Gastrocnemius medialis (tissue), 4 donors: ENCODE measurements at regions of chr20 and their contacts with region 1.

Region 1: GRCh38 chr20:2651772-2652723 is at the start of gene NOP56:
- DNase-seq: peak; percentile 81 to 85
- ATAC-seq: peak; percentile 90 to 92
- H3K4me3 ChIP-seq: peak within 1 kb of the TSS; percentile 84 to 96 (median 90)
- H3K27ac ChIP-seq: peak within 1 kb of the TSS; percentile 91 to 97 (median 94)
- H3K4me1 ChIP-seq: peaks cover 17 to 21% of the 10 kb centered on the region in 2 donors
- H3K27me3 ChIP-seq: no peaks in the 10 kb centered on the region
- CTCF ChIP-seq: no peak
- POLR2A ChIP-seq: peak; percentile 84 to 95
- total RNA-seq, gene NOP56: 40.7 to 71.0 (median 54.9) TPM

Region 2: GRCh38 chr20:2470423-2471193 is 181.4 kb before region 1 on chr20 and contains the start of gene SNRPB:
- in situ Hi-C with region 1: no loop called
- intact Hi-C with region 1: loop called (anchors 2 kb)
- DNase-seq: peak; percentile 96 to 97
- ATAC-seq: peak; percentile 98 to 99
- H3K4me3 ChIP-seq: peak within 1 kb of the TSS; percentile 77 to 95 (median 84)
- H3K27ac ChIP-seq: peak within 1 kb of the TSS; percentile 86 to 95 (median 88)
- H3K4me1 ChIP-seq: peaks cover 12 to 15% of the 10 kb centered on the region in 2 donors
- H3K27me3 ChIP-seq: no peaks in the 10 kb centered on the region
- CTCF ChIP-seq: no peak
- POLR2A ChIP-seq: peak; percentile 86 to 96
- total RNA-seq, gene SNRPB: 131 to 209 (median 190) TPM

Region 3: DNA sequence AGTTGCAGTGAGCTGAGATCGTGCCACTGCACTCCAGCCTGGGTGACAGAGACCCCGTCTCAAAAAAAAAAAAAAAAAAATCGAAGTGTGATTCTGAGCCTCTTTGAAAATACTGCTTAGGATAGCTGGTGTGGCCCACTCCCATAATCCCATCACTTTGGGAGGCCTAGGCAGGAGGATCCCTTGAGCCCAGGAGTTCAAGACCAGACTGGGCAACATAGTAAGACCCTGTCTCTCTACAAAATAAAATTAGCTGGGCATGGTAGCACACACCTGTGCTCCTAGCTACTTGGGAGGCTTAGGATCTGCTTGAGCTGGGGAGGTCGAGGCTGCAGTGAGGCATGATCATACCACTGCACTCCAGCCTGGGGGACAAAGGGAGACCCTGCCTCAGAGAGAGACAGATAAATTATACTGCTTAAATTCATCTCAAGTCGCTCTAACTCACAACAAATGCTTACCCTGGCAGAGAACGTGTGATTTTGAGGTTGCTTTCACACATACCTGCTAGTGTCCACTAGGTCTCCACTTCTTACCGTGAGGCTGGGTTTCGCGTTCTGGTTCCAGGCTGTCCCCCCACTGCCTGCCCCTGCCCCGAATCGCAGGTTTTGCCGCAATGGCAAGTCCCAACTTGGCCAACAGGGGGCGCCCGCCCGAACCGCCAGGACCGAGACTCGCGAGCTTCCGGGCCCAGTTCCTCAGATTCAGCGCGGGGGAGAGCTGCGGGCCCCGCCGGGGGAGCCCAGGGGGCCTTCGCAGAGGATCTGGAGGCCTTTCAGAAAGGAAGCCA is 127.9 kb before region 1 on chr20:
- in situ Hi-C with region 1: loop called in 1 of 4 experiments (anchors 10 kb)
- intact Hi-C with region 1: loop called (anchors 2 kb)
- DNase-seq: peak; percentile 53 to 64
- ATAC-seq: peak; percentile 74 to 75
- H3K4me3 ChIP-seq: peak overlapping the region; percentile 70 to 85 (median 80)
- H3K27ac ChIP-seq: peak overlapping the region; percentile 68 to 86 (median 82)
- H3K4me1 ChIP-seq: peaks cover 0 to 12% of the 10 kb centered on the region in 2 donors
- H3K27me3 ChIP-seq: peaks cover 0 to 4% (median 0%) of the 10 kb centered on the region in 3 donors
- CTCF ChIP-seq: peak; percentile 69 to 96 (median 89)
- POLR2A ChIP-seq: peak; percentile 50 to 56

Region 4: DNA sequence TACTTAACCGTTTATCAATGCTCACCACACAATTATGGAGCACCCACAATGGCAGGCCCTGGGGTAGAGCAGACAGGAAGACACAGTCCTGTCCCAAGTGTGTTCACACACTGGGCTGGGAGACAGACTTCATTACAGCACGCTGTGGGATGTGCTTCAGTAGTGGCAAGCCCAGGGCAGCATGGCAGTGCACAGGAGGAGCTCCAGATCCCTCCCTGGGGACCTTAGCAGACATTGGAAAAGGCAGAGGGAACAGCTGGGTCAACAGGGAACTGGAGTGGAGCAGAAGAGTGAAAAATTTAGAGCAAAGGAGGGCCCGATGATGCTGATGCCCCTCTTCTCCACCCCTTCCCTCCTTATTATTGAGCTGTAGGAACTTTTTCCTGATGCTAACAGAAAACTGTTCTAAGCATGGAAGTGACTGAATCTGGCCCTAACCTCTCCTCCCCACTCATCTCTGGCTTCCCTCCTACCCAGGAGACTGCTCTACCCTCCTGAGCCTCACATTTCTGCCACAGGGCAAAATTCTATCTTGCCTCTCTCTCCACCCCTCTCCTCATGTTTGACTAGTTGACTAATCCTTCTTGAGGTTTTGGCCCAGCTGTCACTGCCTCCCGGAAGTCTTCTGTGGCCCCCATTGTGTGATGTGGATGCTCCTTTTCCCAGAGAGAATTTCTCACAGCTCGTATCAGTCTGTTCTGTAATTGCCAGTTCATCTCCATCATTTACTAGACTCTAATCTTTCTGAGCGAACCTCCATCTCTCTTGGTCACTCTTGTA is 40.9 kb before region 1 on chr20:
- in situ Hi-C with region 1: no loop called
- intact Hi-C with region 1: no loop called
- DNase-seq: no peak
- ATAC-seq: no peak
- H3K4me3 ChIP-seq: no peak overlapping the region
- H3K27ac ChIP-seq: no peak overlapping the region
- H3K4me1 ChIP-seq: no peaks in the 10 kb centered on the region
- H3K27me3 ChIP-seq: no peaks in the 10 kb centered on the region
- CTCF ChIP-seq: no peak
- POLR2A ChIP-seq: no peak

Region 5: GRCh38 chr20:2663887-2664719 is 12.1 kb after region 1 on chr20 and contains the start of gene IDH3B:
- in situ Hi-C with region 1: no loop called
- intact Hi-C with region 1: loop called (anchors 1 kb)
- DNase-seq: peak; percentile 87 to 93
- ATAC-seq: peak; percentile 97 to 98
- H3K4me3 ChIP-seq: peak within 1 kb of the TSS; percentile 66 to 98 (median 83)
- H3K27ac ChIP-seq: peak within 1 kb of the TSS; percentile 86 to 89 (median 87)
- H3K4me1 ChIP-seq: peaks cover 13 to 14% of the 10 kb centered on the region in 2 donors
- H3K27me3 ChIP-seq: no peaks in the 10 kb centered on the region
- CTCF ChIP-seq: no peak
- POLR2A ChIP-seq: peak; percentile 70 to 76
- total RNA-seq, gene IDH3B: 95.5 to 176 (median 136) TPM

Region 6: GRCh38 chr20:2840138-2840966 is 188.3 kb after region 1 on chr20 and contains the starts of genes PCED1A and VPS16:
- in situ Hi-C with region 1: no loop called
- intact Hi-C with region 1: loop called (anchors 5 kb)
- DNase-seq: peak; percentile 71 to 82
- ATAC-seq: peak; percentile 95 to 97
- H3K4me3 ChIP-seq: peak within 1 kb of the TSS; percentile 88 to 98 (median 90)
- H3K27ac ChIP-seq: peak within 1 kb of the TSS; percentile 83 to 97 (median 94)
- H3K4me1 ChIP-seq: peaks cover 16 to 23% of the 10 kb centered on the region in 2 donors
- H3K27me3 ChIP-seq: no peaks in the 10 kb centered on the region
- CTCF ChIP-seq: no peak
- POLR2A ChIP-seq: peak; percentile 42 to 60
- total RNA-seq, gene PCED1A: 2.6 to 9.3 (median 5.7) TPM
- total RNA-seq, gene VPS16: 17.3 to 26.4 (median 21.6) TPM